A673 (cell line): ENCODE measurements at regions of chr5 and their contacts with region 1.

Region 1: GRCh38 chr5:104347119-104347708 is 784.6 kb upstream of the NUDT12 start:
- DNase-seq: peak; percentile 74
- H3K4me3 ChIP-seq: no peak overlapping the region
- H3K27ac ChIP-seq: no peak overlapping the region
- H3K4me1 ChIP-seq: peaks cover 25% of the 10 kb centered on the region
- H3K27me3 ChIP-seq: no peaks in the 10 kb centered on the region
- CTCF ChIP-seq: peak; percentile 57

Region 2: GRCh38 chr5:104170926-104171325 is 176.3 kb before region 1 on chr5:
- CTCF ChIA-PET with region 1: no interaction called
- POLR2A ChIA-PET with region 1: no interaction called
- intact Hi-C with region 1: no loop called
- DNase-seq: no peak
- H3K4me3 ChIP-seq: no peak overlapping the region
- H3K27ac ChIP-seq: no peak overlapping the region
- H3K4me1 ChIP-seq: peaks cover 21% of the 10 kb centered on the region
- H3K27me3 ChIP-seq: no peaks in the 10 kb centered on the region
- CTCF ChIP-seq: no peak

Region 3: DNA sequence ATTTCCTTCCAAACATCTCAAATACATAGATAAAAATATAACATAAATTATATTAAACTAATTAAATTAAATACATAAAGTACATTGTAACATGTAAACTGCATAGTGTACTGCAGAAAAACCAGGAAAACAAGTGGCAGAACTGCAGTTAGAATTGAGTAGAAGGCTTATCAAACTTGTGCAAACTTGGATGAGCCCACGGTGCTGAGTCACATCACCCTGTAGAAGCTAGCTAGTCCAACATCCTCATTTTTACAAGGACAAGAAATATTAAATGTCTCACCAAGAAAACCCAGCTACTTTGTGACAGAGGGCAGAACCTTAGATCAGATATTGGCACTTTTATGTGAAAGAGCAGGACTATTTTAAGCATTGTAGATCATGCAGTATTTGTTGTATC is 23.3 kb after region 1 on chr5:
- CTCF ChIA-PET with region 1: no interaction called
- POLR2A ChIA-PET with region 1: no interaction called
- intact Hi-C with region 1: no loop called
- DNase-seq: no peak
- H3K4me3 ChIP-seq: no peak overlapping the region
- H3K27ac ChIP-seq: no peak overlapping the region
- H3K4me1 ChIP-seq: peaks cover 11% of the 10 kb centered on the region
- H3K27me3 ChIP-seq: no peaks in the 10 kb centered on the region
- CTCF ChIP-seq: no peak

Region 4: DNA sequence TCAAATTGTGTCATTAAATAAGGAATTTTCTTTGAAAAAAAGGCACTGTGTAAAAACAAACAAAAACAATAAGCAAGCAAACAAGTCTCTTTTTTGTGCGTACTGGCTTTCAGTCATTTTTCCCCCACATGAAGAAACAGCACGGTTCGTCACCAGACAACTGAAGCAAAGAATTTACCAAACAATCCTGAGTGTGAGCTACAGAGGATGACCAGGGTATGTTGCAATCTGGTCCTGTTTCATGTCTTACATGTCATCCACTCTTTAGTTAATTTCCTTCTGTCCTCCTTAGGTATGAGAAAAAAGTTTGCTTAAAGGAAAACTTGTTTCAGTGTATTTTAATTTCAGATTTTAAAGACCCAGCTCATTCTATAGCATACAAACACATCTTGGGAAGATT is 296.1 kb after region 1 on chr5:
- CTCF ChIA-PET with region 1: no interaction called
- POLR2A ChIA-PET with region 1: no interaction called
- intact Hi-C with region 1: loop called (anchors 5 kb)
- DNase-seq: peak; percentile 91
- H3K4me3 ChIP-seq: peak overlapping the region; percentile 11
- H3K27ac ChIP-seq: peak overlapping the region; percentile 95
- H3K4me1 ChIP-seq: peaks cover 63% of the 10 kb centered on the region
- H3K27me3 ChIP-seq: no peaks in the 10 kb centered on the region
- CTCF ChIP-seq: no peak

Region 5: DNA sequence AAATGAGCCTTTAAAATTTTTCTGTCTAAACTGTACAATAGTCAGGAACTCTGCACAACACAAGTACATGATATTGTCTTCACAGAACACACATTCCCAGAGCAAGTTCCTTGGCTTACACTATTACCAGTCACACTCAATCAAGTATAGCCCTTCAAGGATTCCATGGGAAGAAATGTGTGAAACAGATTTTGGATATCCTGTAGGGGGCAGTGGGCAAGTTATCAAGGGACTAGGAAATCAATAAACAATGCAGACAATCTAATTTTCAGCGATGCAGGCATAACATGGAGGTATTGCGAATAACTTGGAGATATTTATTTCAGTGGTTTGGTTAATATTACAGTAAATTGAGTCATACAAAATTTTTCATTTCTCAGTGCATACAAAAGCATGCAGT is 386.8 kb after region 1 on chr5:
- CTCF ChIA-PET with region 1: no interaction called
- POLR2A ChIA-PET with region 1: no interaction called
- intact Hi-C with region 1: loop called (anchors 10 kb)
- DNase-seq: peak; percentile 68
- H3K4me3 ChIP-seq: no peak overlapping the region
- H3K27ac ChIP-seq: no peak overlapping the region
- H3K4me1 ChIP-seq: peaks cover 26% of the 10 kb centered on the region
- H3K27me3 ChIP-seq: no peaks in the 10 kb centered on the region
- CTCF ChIP-seq: peak; percentile 62

Region 6: GRCh38 chr5:104928906-104929520 is 581.8 kb after region 1 on chr5:
- CTCF ChIA-PET with region 1: no interaction called
- POLR2A ChIA-PET with region 1: no interaction called
- intact Hi-C with region 1: no loop called
- DNase-seq: no peak
- H3K4me3 ChIP-seq: no peak overlapping the region
- H3K27ac ChIP-seq: no peak overlapping the region
- H3K4me1 ChIP-seq: no peaks in the 10 kb centered on the region
- H3K27me3 ChIP-seq: no peaks in the 10 kb centered on the region
- CTCF ChIP-seq: no peak